Heart left ventricle (tissue), 16 donors: ENCODE measurements at regions of chr15 and their contacts with region 1.

Region 1: DNA sequence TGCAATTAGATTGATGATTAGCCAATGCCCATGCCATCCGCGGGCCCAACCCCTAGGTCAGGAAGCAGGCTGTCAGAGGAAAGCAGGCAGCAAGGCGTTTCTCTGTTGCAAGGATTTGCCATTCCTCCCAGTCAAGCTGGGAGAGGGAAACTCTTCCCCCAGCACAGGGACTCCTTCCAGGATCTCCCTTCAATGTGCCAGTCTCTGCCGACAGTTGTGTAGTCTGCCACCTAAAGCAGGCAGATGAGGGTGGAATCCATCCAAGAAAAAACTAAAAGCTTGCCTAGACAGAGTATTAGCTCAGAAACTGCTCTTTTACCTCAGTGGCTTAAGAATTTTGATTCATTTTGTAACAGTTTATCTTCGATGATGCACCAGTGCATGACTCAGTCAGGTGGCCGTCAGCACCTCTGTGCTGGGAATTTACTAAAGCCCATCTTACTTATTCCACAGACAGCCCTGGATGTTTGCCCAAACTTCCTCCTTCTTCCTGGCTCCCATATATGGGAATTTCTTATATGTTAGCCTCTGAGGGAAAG is 501.5 kb upstream of the THBS1 start:
- DNase-seq: no peak
- ATAC-seq: peak in 1 of 4 donors; percentile 12
- H3K4me3 ChIP-seq: no peak overlapping the region
- H3K27ac ChIP-seq: no peak overlapping the region
- H3K4me1 ChIP-seq: peaks cover 0 to 12% (median 0%) of the 10 kb centered on the region in 12 donors
- H3K27me3 ChIP-seq: no peaks in the 10 kb centered on the region
- CTCF ChIP-seq: no peak
- POLR2A ChIP-seq: no peak

Region 2: DNA sequence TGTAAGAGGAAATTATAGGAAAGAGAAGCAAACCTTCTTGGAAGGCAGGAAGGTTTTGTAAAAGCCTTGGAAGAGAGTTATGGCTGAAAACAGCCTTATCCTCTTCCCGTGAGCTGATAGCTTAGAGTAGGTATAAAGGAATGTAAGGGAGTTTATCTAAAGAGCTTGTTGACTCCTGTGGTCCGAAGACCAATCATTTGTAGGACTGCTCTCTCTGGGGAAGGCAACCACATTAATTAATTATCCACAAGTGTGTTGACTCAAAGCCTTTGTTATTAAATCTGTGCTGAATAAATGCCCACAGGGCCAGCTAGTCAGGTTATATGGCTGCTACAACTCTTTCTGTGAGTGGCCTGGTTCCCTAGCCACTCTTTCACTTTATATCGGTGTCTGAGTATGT is 62.7 kb before region 1 on chr15:
- intact Hi-C with region 1: loop called in 1 of 10 experiments (anchors 10 kb)
- DNase-seq: no peak
- ATAC-seq: no peak
- H3K4me3 ChIP-seq: no peak overlapping the region
- H3K27ac ChIP-seq: no peak overlapping the region
- H3K4me1 ChIP-seq: no peaks in the 10 kb centered on the region
- H3K27me3 ChIP-seq: no peaks in the 10 kb centered on the region
- CTCF ChIP-seq: no peak
- POLR2A ChIP-seq: no peak